Dorsolateral prefrontal cortex (tissue), 120 donors: ENCODE measurements at regions of chr1 and their contacts with region 1.

Region 1: GRCh38 chr1:224454397-224455066 is 19.9 kb upstream of the WDR26 start:
- DNase-seq: no peak
- H3K4me3 ChIP-seq: no peak overlapping the region
- H3K27ac ChIP-seq: no peak overlapping the region
- H3K27me3 ChIP-seq: no peaks in the 10 kb centered on the region
- CTCF ChIP-seq: no peak

Region 2: GRCh38 chr1:224113918-224114786 is 340.4 kb before region 1 on chr1 and contains the start of gene FBXO28:
- intact Hi-C with region 1: loop called in 1 of 2 experiments (anchors 5 kb)
- DNase-seq: peak; percentile 87 to 99 (median 95)
- H3K4me3 ChIP-seq: peak within 1 kb of the TSS; percentile 69 to 99 (median 92)
- H3K27ac ChIP-seq: peak within 1 kb of the TSS; percentile 76 to 99 (median 95)
- H3K27me3 ChIP-seq: no peaks in the 10 kb centered on the region
- CTCF ChIP-seq: peak in 27 of 56 donors; percentile 2 to 50 (median 33)
- total RNA-seq, gene FBXO28: 21.1 to 49.6 (median 37.7) TPM

Region 3: GRCh38 chr1:224356685-224357625 is 97.6 kb before region 1 on chr1 and contains the start of gene CNIH4:
- intact Hi-C with region 1: loop called in 1 of 2 experiments (anchors 5 kb)
- DNase-seq: peak; percentile 75 to 95 (median 92)
- H3K4me3 ChIP-seq: peak within 1 kb of the TSS; percentile 61 to 98 (median 91)
- H3K27ac ChIP-seq: peak within 1 kb of the TSS in 57 of 59 donors; percentile 16 to 95 (median 85)
- H3K27me3 ChIP-seq: no peaks in the 10 kb centered on the region
- CTCF ChIP-seq: peak in 25 of 56 donors; percentile 11 to 56 (median 26)
- total RNA-seq, gene CNIH4: 20.5 to 44.8 (median 32.7) TPM

Region 4: DNA sequence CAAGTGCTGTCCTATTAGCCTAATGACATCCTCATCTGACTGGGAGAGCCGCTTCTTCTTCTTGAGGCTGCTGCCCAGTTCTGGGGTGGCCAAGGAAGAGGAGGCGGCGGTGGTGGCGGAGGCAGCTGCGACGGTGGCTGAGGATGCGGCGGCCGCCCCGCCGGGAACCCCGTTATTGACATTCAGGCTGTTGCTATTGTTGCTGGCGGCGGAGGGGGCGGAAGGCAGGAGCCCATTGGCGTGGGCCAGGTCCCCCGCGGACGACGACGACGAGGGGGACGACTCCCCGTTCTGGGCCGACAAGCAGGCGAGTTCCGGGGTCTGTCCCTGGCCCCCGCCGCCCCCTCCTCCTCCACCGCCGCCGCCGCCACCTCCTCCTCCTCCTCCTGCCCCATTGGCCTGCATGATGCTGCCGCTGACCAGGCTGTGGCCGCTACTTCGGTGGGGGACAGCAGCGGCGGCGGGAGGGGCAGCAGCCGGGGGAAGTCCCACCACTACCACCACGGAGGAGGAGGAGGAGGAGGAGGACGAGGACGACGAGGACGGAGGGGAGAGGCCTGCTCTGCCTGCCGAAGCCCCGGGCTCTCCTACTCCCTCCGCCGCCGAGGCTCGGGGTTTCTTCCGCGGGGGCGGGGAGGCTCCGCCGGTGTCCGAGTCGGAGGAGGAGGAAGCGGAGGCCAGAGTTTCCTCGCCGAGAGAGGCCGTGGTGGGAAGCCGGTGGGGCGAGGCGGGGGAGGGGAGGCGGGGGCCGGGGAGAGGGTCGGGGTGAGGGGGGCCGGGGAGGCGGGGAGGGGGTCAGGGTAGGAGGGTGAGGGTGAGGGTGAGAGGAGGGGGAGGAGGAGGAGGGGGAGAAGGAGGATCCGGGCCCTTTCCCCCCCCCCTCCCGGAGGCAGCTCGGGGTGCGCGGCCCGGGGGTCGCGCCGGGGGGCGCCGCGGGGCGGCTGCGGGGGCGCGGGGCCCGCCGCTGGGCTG is 20.5 kb before region 1 on chr1:
- intact Hi-C with region 1: loop called in 1 of 2 experiments (anchors 2 kb)
- DNase-seq: peak in 8 of 10 donors; percentile 29 to 63 (median 41)
- H3K4me3 ChIP-seq: peak overlapping the region; percentile 22 to 97 (median 92)
- H3K27ac ChIP-seq: peak overlapping the region; percentile 33 to 98 (median 93)
- H3K27me3 ChIP-seq: no peaks in the 10 kb centered on the region
- CTCF ChIP-seq: no peak

Region 5: DNA sequence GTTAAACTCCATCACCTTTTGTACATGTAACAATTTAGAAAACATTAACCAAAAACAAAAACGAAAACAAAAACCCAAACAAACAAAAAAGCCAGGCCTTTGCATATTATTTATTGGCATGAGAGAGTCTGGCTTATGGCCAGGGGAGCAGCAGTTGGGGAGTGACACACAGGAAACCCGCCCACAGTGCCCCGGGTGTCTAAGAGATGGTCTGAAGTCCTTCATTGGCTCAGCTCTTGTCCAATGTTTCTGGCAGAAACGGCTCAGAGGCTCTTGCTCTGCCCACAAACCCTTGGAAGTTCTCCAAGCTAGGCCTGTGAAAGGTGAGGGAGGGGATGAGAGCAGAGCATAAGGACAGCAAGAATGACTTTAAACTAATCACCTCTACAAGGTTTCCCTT is 293.0 kb after region 1 on chr1:
- intact Hi-C with region 1: no loop called
- DNase-seq: no peak
- H3K4me3 ChIP-seq: no peak overlapping the region
- H3K27ac ChIP-seq: no peak overlapping the region
- H3K27me3 ChIP-seq: no peaks in the 10 kb centered on the region
- CTCF ChIP-seq: no peak